Upper lobe of right lung (tissue), 1 donor: ENCODE measurements at regions of chr15 and their contacts with region 1.

Region 1: DNA sequence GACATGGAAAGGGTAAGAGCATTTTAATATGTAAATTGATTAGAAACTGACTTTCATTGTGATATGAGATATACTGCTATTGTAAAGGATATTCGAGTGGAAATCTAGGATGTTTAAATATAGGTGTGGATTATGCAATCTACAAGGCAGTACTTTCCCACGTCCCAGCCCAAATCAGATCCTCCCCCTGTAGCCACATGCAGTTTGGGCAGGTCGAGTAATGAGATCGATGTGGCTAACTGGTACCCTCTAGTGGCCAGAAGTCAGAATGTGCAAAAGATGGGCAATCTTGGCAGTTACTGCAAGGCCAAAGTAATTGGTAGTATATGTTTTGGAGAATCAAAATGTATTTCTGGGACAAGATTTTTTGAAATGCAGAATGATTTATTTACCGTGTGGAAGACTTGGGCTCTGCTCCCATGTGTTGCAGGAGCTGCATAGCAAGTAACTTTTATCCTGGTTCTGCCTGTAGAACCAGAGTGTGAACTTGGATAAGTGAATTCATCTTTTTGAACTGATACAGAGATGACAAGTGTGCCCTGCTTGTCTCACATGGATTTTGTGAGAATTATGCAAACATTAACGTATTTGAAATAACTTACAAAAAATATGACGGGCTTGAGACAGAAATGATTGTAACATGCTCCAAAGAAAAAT is 94.5 kb upstream of the ADAMTSL3 start:
- DNase-seq: no peak
- ATAC-seq: peak; percentile 95
- H3K4me3 ChIP-seq: no peak overlapping the region
- H3K27ac ChIP-seq: no peak overlapping the region
- H3K4me1 ChIP-seq: no peaks in the 10 kb centered on the region
- H3K27me3 ChIP-seq: peaks cover 7% of the 10 kb centered on the region
- CTCF ChIP-seq: peak; percentile 78

Region 2: GRCh38 chr15:83436458-83437158 is 122.8 kb before region 1 on chr15:
- intact Hi-C with region 1: loop called (anchors 5 kb)
- DNase-seq: no peak
- ATAC-seq: peak; percentile 68
- H3K4me3 ChIP-seq: no peak overlapping the region
- H3K27ac ChIP-seq: no peak overlapping the region
- H3K4me1 ChIP-seq: no peaks in the 10 kb centered on the region
- H3K27me3 ChIP-seq: peaks cover 6% of the 10 kb centered on the region
- CTCF ChIP-seq: peak; percentile 30